Activated naive CD8-positive, alpha-beta T cell treated with anti-CD3 and anti-CD28 coated beads, Interleukin-2, amount 10 ng/mL, durations not matched to agents 7 days and 5 days (primary cell): ENCODE measurements at regions of chr1 and their contacts with region 1.

Region 1: GRCh38 chr1:156226116-156226538 is 13.3 kb downstream of the PMF1 start:
- DNase-seq: no peak
- ATAC-seq: no peak
- H3K4me3 Mint-ChIP-seq: peak overlapping the region; percentile 20
- H3K27ac Mint-ChIP-seq: peak overlapping the region; percentile 69
- H3K4me1 Mint-ChIP-seq: peaks cover 42% of the 10 kb centered on the region
- H3K27me3 Mint-ChIP-seq: no peaks in the 10 kb centered on the region

Region 2: GRCh38 chr1:156198831-156199349 is 27.2 kb before region 1 on chr1:
- POLR2A ChIA-PET with region 1: interaction called, 12 read pairs
- DNase-seq: peak; percentile 37
- ATAC-seq: peak; percentile 65
- H3K4me3 Mint-ChIP-seq: peak overlapping the region; percentile 65
- H3K27ac Mint-ChIP-seq: peak overlapping the region; percentile 92
- H3K4me1 Mint-ChIP-seq: peaks cover 49% of the 10 kb centered on the region
- H3K27me3 Mint-ChIP-seq: no peaks in the 10 kb centered on the region

Region 3: GRCh38 chr1:156551866-156552265 is 325.7 kb after region 1 on chr1:
- POLR2A ChIA-PET with region 1: no interaction called
- DNase-seq: no peak
- ATAC-seq: no peak
- H3K4me3 Mint-ChIP-seq: no peak overlapping the region
- H3K27ac Mint-ChIP-seq: no peak overlapping the region
- H3K4me1 Mint-ChIP-seq: peaks cover 2% of the 10 kb centered on the region
- H3K27me3 Mint-ChIP-seq: no peaks in the 10 kb centered on the region